ENCODE measurements at regions of chr17 and their contacts with region 1.

Region 1: GRCh38 chr17:28896884-28897768 is at the start of gene FLOT2:
- DNase-seq: peak; percentile 84
- ATAC-seq: peak; percentile 59
- H3K4me3 Mint-ChIP-seq: peak within 1 kb of the TSS; percentile 93
- H3K27ac Mint-ChIP-seq: peak within 1 kb of the TSS; percentile 93
- H3K4me1 Mint-ChIP-seq: peaks cover 73% of the 10 kb centered on the region
- H3K27me3 Mint-ChIP-seq: no peaks in the 10 kb centered on the region
- total RNA-seq, gene FLOT2: 81.3 to 88.4 TPM

Region 2: GRCh38 chr17:28878981-28879380 is 18.1 kb before region 1 on chr17:
- CTCF ChIA-PET with region 1: interaction called, 3 read pairs
- POLR2A ChIA-PET with region 1: interaction called, 4 read pairs
- intact Hi-C with region 1: loop called (anchors 1 kb)
- DNase-seq: peak; percentile 55
- ATAC-seq: no peak
- H3K4me3 Mint-ChIP-seq: no peak overlapping the region
- H3K27ac Mint-ChIP-seq: no peak overlapping the region
- H3K4me1 Mint-ChIP-seq: peaks cover 31% of the 10 kb centered on the region
- H3K27me3 Mint-ChIP-seq: no peaks in the 10 kb centered on the region

Region 3: GRCh38 chr17:29140051-29140621 is 243.0 kb after region 1 on chr17:
- CTCF ChIA-PET with region 1: interaction called, 4 read pairs
- POLR2A ChIA-PET with region 1: no interaction called
- intact Hi-C with region 1: loop called in 1 of 2 experiments (anchors 1 kb)
- DNase-seq: peak; percentile 92
- ATAC-seq: peak; percentile 60
- H3K4me3 Mint-ChIP-seq: peak overlapping the region; percentile 89
- H3K27ac Mint-ChIP-seq: peak overlapping the region; percentile 97
- H3K4me1 Mint-ChIP-seq: peaks cover 74% of the 10 kb centered on the region
- H3K27me3 Mint-ChIP-seq: no peaks in the 10 kb centered on the region